CD8-positive, alpha-beta T cell (primary cell): ENCODE measurements at regions of chr6 and their contacts with region 1.

Region 1: GRCh38 chr6:31087494-31088089 is 24.8 kb downstream of the C6orf15 start:
- DNase-seq: peak; percentile 80 to 93 (median 88)
- ATAC-seq: peak; percentile 98
- H3K4me3 ChIP-seq: no peak overlapping the region
- H3K4me3 Mint-ChIP-seq: no peak overlapping the region
- H3K27ac ChIP-seq: no peak overlapping the region
- H3K27ac Mint-ChIP-seq: no peak overlapping the region
- H3K4me1 ChIP-seq: no peaks in the 10 kb centered on the region
- H3K4me1 Mint-ChIP-seq: peaks cover 8% of the 10 kb centered on the region
- H3K27me3 ChIP-seq: no peaks in the 10 kb centered on the region
- H3K27me3 Mint-ChIP-seq: no peaks in the 10 kb centered on the region
- CTCF ChIP-seq: peak; percentile 63

Region 2: DNA sequence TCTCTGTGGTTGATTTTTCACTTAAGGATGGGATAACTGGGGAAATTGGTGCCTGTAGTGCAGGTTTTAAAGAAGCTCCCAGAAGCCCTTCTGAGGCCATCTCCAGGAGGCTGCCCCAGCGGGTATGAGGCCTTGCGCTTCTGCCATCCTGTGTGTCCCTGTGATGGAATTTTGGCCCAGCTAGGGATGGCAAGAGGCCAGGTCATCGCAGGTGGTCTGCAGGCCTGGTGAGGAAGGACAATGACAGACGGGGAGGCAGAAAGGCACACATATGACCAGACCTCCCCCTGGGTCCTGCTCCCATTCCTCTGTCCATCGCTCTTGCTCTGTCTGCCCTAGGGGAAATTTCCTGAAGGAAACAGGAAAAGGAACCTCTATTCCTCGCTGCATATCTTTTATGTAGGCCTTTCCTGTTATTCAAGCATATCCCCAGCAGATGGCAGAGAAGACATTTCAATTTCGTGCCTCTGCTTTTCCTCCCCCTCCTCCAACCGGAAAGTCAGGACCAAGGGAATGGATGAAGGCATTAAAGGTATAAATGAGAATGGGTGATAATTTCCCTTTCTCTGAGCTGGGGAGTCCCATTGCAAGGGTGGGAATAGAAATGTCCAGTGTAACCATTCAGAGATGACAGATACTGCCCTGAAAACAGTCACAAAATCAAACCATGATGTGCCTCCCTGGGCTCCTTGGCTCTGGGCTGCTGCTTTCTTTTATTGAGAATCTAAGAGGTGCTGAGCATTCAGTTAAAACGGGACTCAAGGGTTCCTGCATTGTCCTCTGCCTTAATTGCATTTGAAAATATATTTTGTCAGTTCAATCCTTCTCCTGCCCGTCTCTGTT is 1382.0 kb before region 1 on chr6:
- CTCF ChIA-PET with region 1: no interaction called
- POLR2A ChIA-PET with region 1: no interaction called
- intact Hi-C with region 1: no loop called
- DNase-seq: peak in 2 of 9 experiments; percentile 57 to 73
- ATAC-seq: no peak
- H3K4me3 ChIP-seq: no peak overlapping the region
- H3K4me3 Mint-ChIP-seq: peak overlapping the region; percentile 26
- H3K27ac ChIP-seq: no peak overlapping the region
- H3K27ac Mint-ChIP-seq: peak overlapping the region; percentile 77
- H3K4me1 ChIP-seq: peaks cover 53% of the 10 kb centered on the region
- H3K4me1 Mint-ChIP-seq: peaks cover 55% of the 10 kb centered on the region
- H3K27me3 ChIP-seq: no peaks in the 10 kb centered on the region
- H3K27me3 Mint-ChIP-seq: peaks cover 19% of the 10 kb centered on the region
- CTCF ChIP-seq: peak; percentile 79

Region 3: DNA sequence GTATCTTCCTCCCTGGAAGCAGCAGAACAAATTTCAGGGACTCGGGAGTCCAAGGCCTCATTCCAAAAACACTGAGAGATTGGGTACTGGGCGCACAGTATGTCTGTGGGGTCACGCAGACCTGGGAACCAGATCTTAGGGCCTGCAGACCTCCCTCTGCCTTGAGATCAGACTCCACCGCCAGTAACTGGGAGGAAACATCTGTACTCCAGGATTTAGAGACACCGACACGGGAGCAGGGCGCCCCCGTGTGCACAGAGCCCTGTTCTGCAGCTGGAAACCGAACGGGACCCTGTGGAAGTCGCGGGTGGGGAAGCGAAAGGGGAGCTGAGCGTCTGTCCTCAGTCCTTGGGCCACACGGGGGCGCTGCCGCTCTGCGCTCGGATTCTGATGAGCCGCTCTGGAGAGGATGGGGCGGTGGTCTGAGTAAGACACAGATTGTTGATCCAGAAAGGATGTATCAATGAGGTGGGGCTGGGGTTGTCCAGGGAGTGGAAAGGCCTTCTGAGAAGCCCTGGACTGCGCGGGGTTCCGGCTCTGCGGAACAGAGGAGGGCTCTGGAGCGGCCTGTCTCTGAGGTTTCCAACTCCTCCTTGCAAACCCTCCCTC is 634.0 kb before region 1 on chr6:
- CTCF ChIA-PET with region 1: no interaction called
- POLR2A ChIA-PET with region 1: no interaction called
- intact Hi-C with region 1: loop called in 1 of 2 experiments (anchors 10 kb)
- DNase-seq: peak; percentile 71 to 93 (median 87)
- ATAC-seq: peak; percentile 83
- H3K4me3 ChIP-seq: peak overlapping the region in 1 of 2 experiments; percentile 41
- H3K4me3 Mint-ChIP-seq: peak overlapping the region; percentile 49
- H3K27ac ChIP-seq: no peak overlapping the region
- H3K27ac Mint-ChIP-seq: no peak overlapping the region
- H3K4me1 ChIP-seq: peaks cover 42% of the 10 kb centered on the region
- H3K4me1 Mint-ChIP-seq: peaks cover 41% of the 10 kb centered on the region
- H3K27me3 ChIP-seq: peaks cover 38 to 64% of the 10 kb centered on the region in 2 experiments
- H3K27me3 Mint-ChIP-seq: peaks cover 68% of the 10 kb centered on the region
- CTCF ChIP-seq: peak; percentile 63

Region 4: DNA sequence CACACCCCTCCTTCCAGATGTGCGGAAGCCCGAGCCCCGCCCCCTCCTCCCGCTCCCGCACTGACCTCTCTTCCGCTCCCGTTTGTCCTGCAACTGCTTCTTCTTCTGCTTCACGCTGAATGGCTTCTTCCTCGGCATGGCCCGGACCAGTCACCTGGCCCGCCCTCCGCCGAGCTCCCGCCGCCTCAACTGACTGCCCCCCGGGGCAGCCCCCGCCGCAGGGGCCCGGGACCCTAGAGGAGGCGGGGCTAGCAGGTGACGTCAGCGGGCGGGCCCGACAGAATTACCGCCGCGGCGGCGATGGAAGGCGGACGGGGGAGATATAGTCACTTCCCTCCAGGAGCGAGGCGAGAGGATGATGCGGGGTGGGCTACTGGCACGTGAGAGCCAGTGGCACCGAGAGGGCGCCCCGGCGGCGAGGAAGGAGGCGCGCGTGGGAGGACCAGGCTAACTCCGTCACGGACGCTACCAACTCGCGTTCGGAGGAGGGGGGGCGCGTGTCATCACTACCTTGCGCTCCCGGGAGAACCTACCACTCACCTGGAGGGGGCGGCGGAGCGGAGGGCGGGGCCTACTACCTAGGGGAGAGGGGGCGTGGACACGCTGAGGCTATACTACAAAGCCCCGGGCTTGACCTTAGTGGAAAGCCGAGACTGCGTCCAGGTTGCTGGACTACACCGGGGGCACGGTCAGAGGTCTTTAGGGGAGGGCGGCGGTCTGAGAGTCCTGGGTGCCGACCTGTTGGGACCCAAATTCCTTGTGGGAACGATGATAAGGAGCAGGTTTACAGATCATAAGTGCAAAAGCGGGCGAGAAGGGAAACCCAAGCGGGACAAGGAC is 531.3 kb before region 1 on chr6 and contains the start of gene GNL1:
- CTCF ChIA-PET with region 1: no interaction called
- POLR2A ChIA-PET with region 1: no interaction called
- intact Hi-C with region 1: no loop called
- DNase-seq: peak; percentile 97 to 100 (median 99)
- ATAC-seq: peak; percentile 90
- H3K4me3 ChIP-seq: peak within 1 kb of the TSS; percentile 75 to 92
- H3K4me3 Mint-ChIP-seq: peak within 1 kb of the TSS; percentile 95
- H3K27ac ChIP-seq: peak within 1 kb of the TSS; percentile 98 to 99
- H3K27ac Mint-ChIP-seq: peak within 1 kb of the TSS; percentile 99
- H3K4me1 ChIP-seq: peaks cover 25% of the 10 kb centered on the region
- H3K4me1 Mint-ChIP-seq: peaks cover 42% of the 10 kb centered on the region
- H3K27me3 ChIP-seq: no peaks in the 10 kb centered on the region
- H3K27me3 Mint-ChIP-seq: no peaks in the 10 kb centered on the region
- CTCF ChIP-seq: no peak
- total RNA-seq, gene GNL1: 148 to 159 TPM

Region 5: GRCh38 chr6:30730601-30731435 is 356.8 kb before region 1 on chr6:
- CTCF ChIA-PET with region 1: interaction called, 12 read pairs
- POLR2A ChIA-PET with region 1: no interaction called
- intact Hi-C with region 1: loop called in 1 of 2 experiments (anchors 5 kb)
- DNase-seq: peak; percentile 67 to 91 (median 85)
- ATAC-seq: peak; percentile 98
- H3K4me3 ChIP-seq: peak overlapping the region in 1 of 2 experiments; percentile 21
- H3K4me3 Mint-ChIP-seq: peak overlapping the region; percentile 47
- H3K27ac ChIP-seq: no peak overlapping the region
- H3K27ac Mint-ChIP-seq: no peak overlapping the region
- H3K4me1 ChIP-seq: peaks cover 29% of the 10 kb centered on the region
- H3K4me1 Mint-ChIP-seq: peaks cover 37% of the 10 kb centered on the region
- H3K27me3 ChIP-seq: no peaks in the 10 kb centered on the region
- H3K27me3 Mint-ChIP-seq: no peaks in the 10 kb centered on the region
- CTCF ChIP-seq: peak; percentile 67

Region 6: DNA sequence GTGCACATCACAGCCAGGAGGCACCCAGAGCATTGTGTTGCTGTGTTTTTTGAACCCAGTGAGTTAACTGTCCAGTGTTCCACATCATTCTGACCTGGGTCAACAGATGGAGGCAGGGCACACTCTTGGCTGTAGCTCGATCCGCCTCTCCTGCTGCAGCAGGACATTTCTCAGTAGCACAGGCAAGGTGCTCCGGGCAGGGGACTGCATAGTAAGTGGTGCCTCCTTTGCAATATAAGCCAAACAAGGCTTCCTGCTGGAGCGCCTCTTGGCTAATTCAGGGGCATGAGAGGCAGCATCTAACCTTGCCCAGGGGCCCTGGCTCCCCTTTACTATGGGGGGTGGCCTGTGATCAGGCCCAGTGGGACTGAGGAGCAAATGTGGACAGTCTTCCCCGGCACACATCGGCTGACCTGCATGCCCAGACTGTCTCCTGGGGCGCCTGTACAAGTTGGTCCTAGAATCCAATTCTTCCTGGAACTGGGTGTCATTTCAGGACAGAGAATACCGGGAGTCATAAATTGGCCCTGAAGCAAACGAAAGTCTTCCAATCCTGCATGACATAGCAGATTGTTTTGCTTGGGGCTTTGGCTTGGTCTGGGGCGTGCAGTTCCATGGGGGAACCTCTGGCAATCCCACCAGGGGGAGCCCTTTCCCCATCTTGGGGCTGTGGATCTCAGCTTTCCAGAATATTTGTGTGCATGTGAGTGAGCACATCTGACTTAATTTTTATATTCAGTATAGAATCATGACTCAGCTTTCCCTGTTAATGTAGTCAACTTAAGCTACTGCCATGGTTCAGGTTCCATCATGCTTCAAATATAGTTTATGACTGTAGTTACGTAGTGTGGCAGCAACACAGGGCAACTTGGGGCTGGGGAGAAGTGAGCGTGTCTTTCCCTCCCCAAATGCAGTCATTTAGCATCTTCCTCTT is 259.3 kb before region 1 on chr6:
- CTCF ChIA-PET with region 1: interaction called, 49 read pairs
- POLR2A ChIA-PET with region 1: interaction called, 3 read pairs
- intact Hi-C with region 1: loop called (anchors 1 kb)
- DNase-seq: peak; percentile 62 to 88 (median 78)
- ATAC-seq: peak; percentile 81
- H3K4me3 ChIP-seq: peak overlapping the region; percentile 64 to 91
- H3K4me3 Mint-ChIP-seq: peak overlapping the region; percentile 96
- H3K27ac ChIP-seq: peak overlapping the region; percentile 67 to 86
- H3K27ac Mint-ChIP-seq: peak overlapping the region; percentile 97
- H3K4me1 ChIP-seq: peaks cover 46% of the 10 kb centered on the region
- H3K4me1 Mint-ChIP-seq: peaks cover 79% of the 10 kb centered on the region
- H3K27me3 ChIP-seq: no peaks in the 10 kb centered on the region
- H3K27me3 Mint-ChIP-seq: no peaks in the 10 kb centered on the region
- CTCF ChIP-seq: peak; percentile 81

Region 7: GRCh38 chr6:31058128-31058894 is 29.3 kb before region 1 on chr6:
- CTCF ChIA-PET with region 1: interaction called, 13 read pairs
- POLR2A ChIA-PET with region 1: no interaction called
- intact Hi-C with region 1: loop called (anchors 1 kb)
- DNase-seq: peak in 2 of 9 experiments; percentile 24 to 43
- ATAC-seq: no peak
- H3K4me3 ChIP-seq: no peak overlapping the region
- H3K4me3 Mint-ChIP-seq: no peak overlapping the region
- H3K27ac ChIP-seq: no peak overlapping the region
- H3K27ac Mint-ChIP-seq: no peak overlapping the region
- H3K4me1 ChIP-seq: no peaks in the 10 kb centered on the region
- H3K4me1 Mint-ChIP-seq: no peaks in the 10 kb centered on the region
- H3K27me3 ChIP-seq: no peaks in the 10 kb centered on the region
- H3K27me3 Mint-ChIP-seq: peaks cover 8% of the 10 kb centered on the region
- CTCF ChIP-seq: peak; percentile 19

Region 8: GRCh38 chr6:31128093-31128676 is 40.6 kb after region 1 on chr6:
- CTCF ChIA-PET with region 1: interaction called, 24 read pairs
- POLR2A ChIA-PET with region 1: no interaction called
- intact Hi-C with region 1: loop called in 1 of 2 experiments (anchors 2 kb)
- DNase-seq: peak; percentile 50 to 87 (median 74)
- ATAC-seq: peak; percentile 90
- H3K4me3 ChIP-seq: no peak overlapping the region
- H3K4me3 Mint-ChIP-seq: no peak overlapping the region
- H3K27ac ChIP-seq: no peak overlapping the region
- H3K27ac Mint-ChIP-seq: no peak overlapping the region
- H3K4me1 ChIP-seq: no peaks in the 10 kb centered on the region
- H3K4me1 Mint-ChIP-seq: peaks cover 8% of the 10 kb centered on the region
- H3K27me3 ChIP-seq: no peaks in the 10 kb centered on the region
- H3K27me3 Mint-ChIP-seq: peaks cover 6% of the 10 kb centered on the region
- CTCF ChIP-seq: peak; percentile 79

Region 9: GRCh38 chr6:32267035-32267434 is 1179.4 kb after region 1 on chr6:
- CTCF ChIA-PET with region 1: no interaction called
- POLR2A ChIA-PET with region 1: no interaction called
- intact Hi-C with region 1: no loop called
- DNase-seq: no peak
- ATAC-seq: no peak
- H3K4me3 ChIP-seq: no peak overlapping the region
- H3K4me3 Mint-ChIP-seq: no peak overlapping the region
- H3K27ac ChIP-seq: no peak overlapping the region
- H3K27ac Mint-ChIP-seq: no peak overlapping the region
- H3K4me1 ChIP-seq: peaks cover 12% of the 10 kb centered on the region
- H3K4me1 Mint-ChIP-seq: peaks cover 12% of the 10 kb centered on the region
- H3K27me3 ChIP-seq: no peaks in the 10 kb centered on the region
- H3K27me3 Mint-ChIP-seq: peaks cover 10% of the 10 kb centered on the region
- CTCF ChIP-seq: no peak

Region 10: DNA sequence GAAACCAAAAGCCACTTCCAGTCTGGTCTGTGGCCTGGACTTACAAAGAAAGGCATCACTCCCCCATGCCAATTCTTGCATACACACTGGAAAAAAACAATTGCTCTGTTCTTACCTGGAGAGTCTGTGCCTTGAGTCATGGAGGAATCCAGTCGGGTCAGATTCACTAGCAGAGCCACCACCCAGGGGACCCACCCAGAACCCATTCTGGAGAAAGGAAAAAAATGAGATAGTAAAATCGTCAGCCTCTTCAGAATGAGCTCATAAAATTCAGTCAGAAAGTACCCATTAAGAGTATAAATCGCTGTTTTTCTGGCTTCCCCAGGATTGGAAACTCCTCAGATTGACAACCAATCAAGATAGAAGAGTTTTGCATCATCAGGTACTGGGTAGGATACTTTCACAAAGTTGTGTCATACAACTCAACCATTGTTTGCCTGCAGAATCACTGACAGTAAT is 1729.2 kb after region 1 on chr6 and contains the start of gene HLA-DOB:
- CTCF ChIA-PET with region 1: no interaction called
- POLR2A ChIA-PET with region 1: no interaction called
- intact Hi-C with region 1: no loop called
- DNase-seq: peak in 2 of 9 experiments; percentile 47 to 58
- ATAC-seq: peak; percentile 86
- H3K4me3 ChIP-seq: no peak within 1 kb of the TSS
- H3K4me3 Mint-ChIP-seq: peak within 1 kb of the TSS; percentile 26
- H3K27ac ChIP-seq: no peak within 1 kb of the TSS
- H3K27ac Mint-ChIP-seq: peak within 1 kb of the TSS; percentile 61
- H3K4me1 ChIP-seq: no peaks in the 10 kb centered on the region
- H3K4me1 Mint-ChIP-seq: no peaks in the 10 kb centered on the region
- H3K27me3 ChIP-seq: no peaks in the 10 kb centered on the region
- H3K27me3 Mint-ChIP-seq: no peaks in the 10 kb centered on the region
- CTCF ChIP-seq: no peak
- total RNA-seq, gene HLA-DOB: 12.8 to 13.4 TPM